Activated CD4-positive, alpha-beta T cell treated with anti-CD3 and anti-CD28 coated beads, Interleukin-2, amount 10 ng/mL, durations not matched to agents 24 days and 14 days (primary cell): ENCODE measurements at regions of chr17 and their contacts with region 1.

Region 1: GRCh38 chr17:78745407-78746088 is 36.5 kb downstream of the CYTH1 start:
- DNase-seq: peak; percentile 85
- H3K4me3 Mint-ChIP-seq: peak overlapping the region; percentile 57
- H3K27ac Mint-ChIP-seq: peak overlapping the region; percentile 75
- H3K4me1 Mint-ChIP-seq: peaks cover 80% of the 10 kb centered on the region
- H3K27me3 Mint-ChIP-seq: no peaks in the 10 kb centered on the region

Region 2: DNA sequence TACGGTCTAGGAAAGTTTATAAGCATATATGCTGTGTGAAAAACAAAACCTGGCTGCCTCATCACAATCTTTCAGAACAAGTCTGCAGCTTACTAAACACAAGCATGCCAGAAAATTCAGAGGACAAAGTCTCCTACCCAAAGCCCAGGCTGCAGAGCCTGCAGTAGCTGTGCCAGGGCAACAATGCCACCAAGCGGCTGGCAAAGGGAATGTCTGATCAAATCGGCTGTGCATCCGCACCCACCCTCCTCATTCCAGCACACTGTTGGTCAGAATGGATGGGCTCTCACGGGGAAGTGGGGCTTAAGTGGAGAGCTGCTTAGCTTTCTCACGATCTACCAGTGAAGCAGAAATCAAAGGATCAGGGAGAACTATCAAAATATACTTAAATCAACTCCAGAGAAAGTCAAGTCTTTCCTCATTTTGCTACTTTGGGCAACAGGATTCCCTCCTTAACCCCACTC is 37.0 kb before region 1 on chr17:
- intact Hi-C with region 1: loop called (anchors 2 kb)
- DNase-seq: peak; percentile 85
- H3K4me3 Mint-ChIP-seq: peak overlapping the region; percentile 78
- H3K27ac Mint-ChIP-seq: peak overlapping the region; percentile 93
- H3K4me1 Mint-ChIP-seq: peaks cover 56% of the 10 kb centered on the region
- H3K27me3 Mint-ChIP-seq: no peaks in the 10 kb centered on the region

Region 3: DNA sequence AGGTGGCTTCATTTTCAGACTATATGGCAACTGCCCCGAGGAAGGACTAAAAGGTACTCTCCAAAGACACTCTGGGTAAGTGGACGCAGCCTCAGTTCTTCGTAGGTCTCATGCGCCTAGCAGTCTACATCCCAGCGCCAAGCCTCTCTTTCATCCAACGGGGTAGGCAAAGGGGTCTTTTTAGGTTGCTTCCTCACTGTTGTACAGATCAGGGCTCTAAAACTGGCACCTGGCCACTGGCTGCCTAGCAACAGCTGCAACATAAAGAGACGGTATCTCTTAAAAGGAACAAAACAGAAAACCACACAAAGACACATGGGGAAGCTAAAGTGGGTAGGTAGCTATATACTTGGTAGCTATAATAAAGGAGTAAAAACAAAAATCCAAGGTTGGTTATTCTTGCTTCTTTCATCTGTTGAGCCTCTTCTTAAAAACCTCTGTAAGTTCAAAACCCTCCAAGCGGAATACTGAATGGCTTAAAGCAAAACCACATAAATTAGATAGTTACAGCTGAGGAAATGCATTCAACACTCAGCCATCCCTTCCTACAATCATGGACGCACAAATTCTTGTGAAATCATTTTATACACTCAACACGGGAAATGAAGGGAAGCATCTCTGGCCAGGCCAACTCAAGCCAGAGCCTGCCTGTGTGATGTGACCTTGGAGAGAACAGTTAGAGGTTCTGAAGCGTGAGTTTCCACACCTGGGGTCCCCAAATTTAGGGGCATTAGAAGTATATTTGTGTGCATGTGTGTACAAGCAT is 13.8 kb after region 1 on chr17:
- intact Hi-C with region 1: loop called (anchors 1 kb)
- DNase-seq: peak; percentile 94
- H3K4me3 Mint-ChIP-seq: peak overlapping the region; percentile 83
- H3K27ac Mint-ChIP-seq: peak overlapping the region; percentile 98
- H3K4me1 Mint-ChIP-seq: peaks cover 62% of the 10 kb centered on the region
- H3K27me3 Mint-ChIP-seq: no peaks in the 10 kb centered on the region

Region 4: GRCh38 chr17:78774956-78775571 is 29.5 kb after region 1 on chr17:
- intact Hi-C with region 1: loop called (anchors 1 kb)
- DNase-seq: peak; percentile 92
- H3K4me3 Mint-ChIP-seq: peak overlapping the region; percentile 89
- H3K27ac Mint-ChIP-seq: peak overlapping the region; percentile 98
- H3K4me1 Mint-ChIP-seq: peaks cover 62% of the 10 kb centered on the region
- H3K27me3 Mint-ChIP-seq: no peaks in the 10 kb centered on the region

Region 5: DNA sequence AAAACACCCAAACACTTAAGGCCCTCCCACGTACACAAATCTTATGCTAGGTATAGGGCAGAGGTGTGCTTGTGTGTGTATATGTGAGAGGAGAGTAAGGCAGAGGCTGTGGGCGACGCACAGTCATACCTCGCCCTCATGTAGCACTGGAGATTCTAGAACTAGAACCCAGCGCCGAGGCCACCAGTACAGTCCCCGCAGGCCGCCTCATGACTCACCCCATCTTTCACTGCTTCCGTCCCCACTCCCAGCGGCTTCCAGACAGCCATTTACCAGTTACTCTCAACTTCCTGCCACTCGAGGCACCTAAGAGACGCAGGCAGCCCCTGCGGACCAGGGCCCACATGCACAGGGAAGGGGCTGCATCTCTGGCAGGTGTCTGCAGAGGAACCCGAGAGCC is 59.8 kb after region 1 on chr17:
- intact Hi-C with region 1: loop called (anchors 2 kb)
- DNase-seq: peak; percentile 86
- H3K4me3 Mint-ChIP-seq: peak overlapping the region; percentile 26
- H3K27ac Mint-ChIP-seq: peak overlapping the region; percentile 75
- H3K4me1 Mint-ChIP-seq: peaks cover 42% of the 10 kb centered on the region
- H3K27me3 Mint-ChIP-seq: no peaks in the 10 kb centered on the region

Region 6: DNA sequence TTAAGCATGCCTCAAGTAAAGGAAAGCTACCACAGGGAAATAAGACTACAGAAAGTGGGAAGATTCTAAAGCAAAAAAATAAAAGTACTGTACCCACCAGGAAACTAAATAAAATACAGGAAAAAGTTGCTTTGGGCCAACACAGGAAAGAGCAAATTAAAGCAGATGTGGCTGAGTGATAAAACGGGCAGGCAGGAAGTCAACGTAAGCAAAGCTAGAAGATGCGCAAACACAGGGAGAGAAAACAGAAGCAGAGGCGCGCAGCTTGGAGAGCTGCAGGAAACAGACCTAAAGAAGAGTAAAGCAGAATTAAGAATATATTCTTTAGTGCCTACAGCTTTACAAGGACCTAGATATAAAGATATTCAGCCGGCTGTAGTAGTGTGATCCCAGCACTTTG is 73.4 kb after region 1 on chr17:
- intact Hi-C with region 1: loop called (anchors 2 kb)
- DNase-seq: peak; percentile 91
- H3K4me3 Mint-ChIP-seq: peak overlapping the region; percentile 70
- H3K27ac Mint-ChIP-seq: peak overlapping the region; percentile 79
- H3K4me1 Mint-ChIP-seq: peaks cover 54% of the 10 kb centered on the region
- H3K27me3 Mint-ChIP-seq: no peaks in the 10 kb centered on the region

Region 7: DNA sequence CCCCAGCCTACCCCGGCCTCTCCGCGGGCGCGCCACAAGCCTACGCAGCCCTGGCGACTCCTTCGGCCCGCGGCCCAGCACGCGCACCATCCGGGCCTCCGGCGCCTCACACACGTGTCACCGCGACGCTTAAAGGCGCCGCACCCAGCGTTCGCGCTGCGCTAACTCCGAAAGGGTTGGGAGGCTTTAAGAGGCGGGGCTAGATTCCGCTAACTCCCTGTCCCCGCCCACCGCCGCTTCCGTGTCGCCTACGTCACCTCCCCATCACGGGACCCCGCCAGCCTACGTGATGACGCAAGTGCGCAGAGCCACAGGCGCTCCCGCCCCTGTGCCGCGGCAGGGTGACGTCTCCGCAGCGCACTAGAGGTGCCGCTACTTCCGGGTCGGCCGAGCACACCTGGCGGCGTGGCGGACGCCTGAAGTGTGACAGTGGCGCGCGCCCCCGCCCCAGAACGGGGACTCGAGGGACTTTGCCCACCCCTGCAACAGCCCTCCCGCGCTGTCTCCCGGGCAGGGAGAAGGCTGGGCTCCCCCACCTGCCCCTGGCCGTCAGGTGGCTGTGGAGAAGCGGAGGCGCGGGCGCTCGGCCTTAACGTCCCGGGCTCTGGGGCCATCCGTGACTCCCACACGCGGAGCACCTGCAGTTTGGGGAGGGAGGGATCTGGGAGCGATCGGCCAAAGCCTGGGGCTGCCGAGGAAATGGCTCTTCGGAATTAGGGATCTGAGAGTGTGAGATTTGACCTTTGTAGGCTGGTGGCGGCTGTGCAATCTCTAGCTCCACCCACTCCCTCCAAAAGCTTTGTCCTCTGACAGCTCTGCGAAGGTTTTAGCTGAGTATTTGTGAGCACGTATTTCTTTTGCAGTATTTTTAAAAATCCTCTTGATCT is 95.4 kb after region 1 on chr17 and contains the start of gene USP36:
- intact Hi-C with region 1: loop called (anchors 2 kb)
- DNase-seq: peak; percentile 100
- H3K4me3 Mint-ChIP-seq: peak within 1 kb of the TSS; percentile 87
- H3K27ac Mint-ChIP-seq: peak within 1 kb of the TSS; percentile 94
- H3K4me1 Mint-ChIP-seq: peaks cover 31% of the 10 kb centered on the region
- H3K27me3 Mint-ChIP-seq: no peaks in the 10 kb centered on the region
- total RNA-seq, gene USP36: 128 TPM in 2 replicates